AG04450 (cell line): ENCODE measurements at regions of chr12 and their contacts with region 1.

Region 1: GRCh38 chr12:49366652-49367380 is 446 bp upstream of the SPATS2 start:
- DNase-seq: peak; percentile 83
- H3K4me3 ChIP-seq: peak overlapping the region; percentile 68
- H3K27ac ChIP-seq: peak overlapping the region; percentile 93
- H3K27me3 ChIP-seq: no peaks in the 10 kb centered on the region
- CTCF ChIP-seq: peak; percentile 25

Region 2: DNA sequence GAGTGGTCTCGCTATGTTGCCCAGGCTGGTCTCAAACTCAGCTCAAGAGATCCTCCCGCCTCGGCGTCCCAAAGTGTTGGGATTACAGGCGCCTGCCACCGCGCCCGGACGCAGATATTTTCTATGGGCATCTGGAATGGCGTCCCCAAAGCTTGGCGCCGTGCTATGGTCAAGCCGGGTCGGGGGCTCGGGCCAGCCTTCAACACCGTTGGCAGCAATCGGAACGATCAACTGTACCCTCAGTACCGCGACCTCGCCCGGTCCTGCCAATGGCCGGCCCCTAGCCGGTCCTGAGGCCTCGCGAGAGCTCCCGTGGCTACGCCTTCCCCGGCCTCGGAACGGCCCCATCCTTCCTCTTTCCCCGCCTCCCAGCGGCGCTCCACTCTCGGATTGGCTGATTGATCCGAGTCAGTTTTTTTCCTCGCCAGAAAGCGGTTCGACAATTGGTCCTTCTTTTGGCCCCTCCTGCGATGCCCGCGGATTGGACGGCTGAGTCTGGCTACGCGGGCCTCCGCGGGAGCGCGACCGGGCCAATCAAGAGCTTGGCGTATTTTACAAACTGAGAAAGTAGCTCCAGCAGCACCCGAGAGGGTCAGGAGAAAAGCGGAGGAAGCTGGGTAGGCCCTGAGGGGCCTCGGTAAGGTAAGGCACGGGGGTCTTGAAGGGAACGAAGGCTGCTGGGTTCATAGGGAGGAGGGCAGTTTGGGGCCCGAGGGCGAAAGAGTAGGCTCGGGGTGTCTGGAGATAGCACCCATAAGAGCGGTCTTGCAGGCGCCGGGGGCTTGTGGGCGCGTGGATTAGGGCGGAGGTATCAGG is 43.9 kb before region 1 on chr12 and contains the start of gene TROAP:
- CTCF ChIA-PET with region 1: no interaction called
- POLR2A ChIA-PET with region 1: interaction called, 11 read pairs
- DNase-seq: peak; percentile 95
- H3K4me3 ChIP-seq: peak within 1 kb of the TSS; percentile 84
- H3K27ac ChIP-seq: peak within 1 kb of the TSS; percentile 47
- H3K27me3 ChIP-seq: peaks cover 4% of the 10 kb centered on the region
- CTCF ChIP-seq: no peak
- polyA plus RNA-seq, gene TROAP: 7.6 and 10.3 TPM in 2 replicates

Region 3: DNA sequence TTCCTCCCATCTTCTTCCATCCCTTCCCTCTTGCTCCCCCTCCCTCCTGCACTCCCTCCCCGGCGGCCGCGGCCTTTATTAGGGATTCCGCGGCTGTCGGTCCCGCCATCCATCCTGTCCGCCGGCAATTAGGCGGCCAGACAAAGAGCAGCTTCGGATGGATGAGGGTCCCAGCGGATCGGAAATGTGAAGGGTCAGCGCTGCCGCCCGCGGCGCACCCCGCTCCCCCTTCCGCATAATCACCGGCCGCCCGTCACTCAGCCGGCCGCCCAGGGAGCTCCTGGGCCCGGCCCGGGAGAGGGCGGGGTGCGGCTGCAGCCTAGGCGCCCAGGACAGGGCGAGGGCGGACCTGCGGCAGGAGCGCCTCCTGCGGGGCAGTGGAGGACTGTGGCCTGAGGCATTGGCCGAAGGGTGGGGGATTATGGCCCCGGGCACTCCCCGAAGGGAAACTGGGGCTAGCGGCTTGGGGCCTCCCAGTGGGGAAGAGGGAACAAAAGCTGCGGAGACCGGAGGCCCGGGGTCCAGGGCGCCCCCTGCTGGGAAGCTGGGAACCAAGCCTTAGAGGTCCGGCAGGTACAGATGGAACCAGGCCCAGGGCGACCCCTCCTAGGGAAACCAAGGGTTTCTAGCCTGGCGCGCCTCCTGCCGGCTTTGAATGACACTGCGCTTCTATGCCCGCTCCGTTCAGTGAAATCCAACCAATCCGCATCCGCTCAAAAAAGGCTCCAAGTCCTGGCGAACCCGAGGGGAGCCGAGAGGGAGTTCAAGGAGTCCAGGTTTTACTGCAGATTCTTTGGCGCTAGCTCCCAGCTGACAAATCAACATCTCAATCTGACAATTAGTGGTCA is 24.5 kb before region 1 on chr12:
- CTCF ChIA-PET with region 1: interaction called, 14 read pairs
- POLR2A ChIA-PET with region 1: interaction called, 12 read pairs
- DNase-seq: peak; percentile 30
- H3K4me3 ChIP-seq: peak overlapping the region; percentile 49
- H3K27ac ChIP-seq: no peak overlapping the region
- H3K27me3 ChIP-seq: peaks cover 85% of the 10 kb centered on the region
- CTCF ChIP-seq: peak; percentile 70

Region 4: GRCh38 chr12:49347384-49348237 is 19.2 kb before region 1 on chr12:
- CTCF ChIA-PET with region 1: interaction called, 14 read pairs
- POLR2A ChIA-PET with region 1: interaction called, 12 read pairs
- DNase-seq: peak; percentile 77
- H3K4me3 ChIP-seq: peak overlapping the region; percentile 66
- H3K27ac ChIP-seq: peak overlapping the region; percentile 39
- H3K27me3 ChIP-seq: peaks cover 44% of the 10 kb centered on the region
- CTCF ChIP-seq: peak; percentile 87

Region 5: DNA sequence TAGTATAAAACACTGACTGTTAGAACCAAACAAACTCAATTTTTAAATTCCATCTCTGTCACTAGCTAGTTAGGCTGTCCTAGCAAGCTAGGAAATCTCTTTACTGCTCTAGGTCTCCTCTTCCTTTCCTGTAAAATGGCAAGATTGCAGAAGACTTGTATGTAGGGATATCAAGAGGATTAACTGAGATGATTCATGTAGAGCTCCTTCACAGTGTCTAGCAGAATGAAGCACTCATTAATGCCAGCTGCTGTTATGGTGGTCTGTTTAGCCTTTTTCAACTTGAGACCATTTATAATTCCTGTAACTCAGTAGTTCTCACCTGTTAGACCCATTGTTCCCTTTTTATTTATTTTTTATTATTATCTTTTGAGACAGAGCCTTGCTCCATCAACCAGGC is 104.2 kb after region 1 on chr12:
- CTCF ChIA-PET with region 1: no interaction called
- POLR2A ChIA-PET with region 1: interaction called, 12 read pairs
- DNase-seq: no peak
- H3K4me3 ChIP-seq: no peak overlapping the region
- H3K27ac ChIP-seq: no peak overlapping the region
- H3K27me3 ChIP-seq: no peaks in the 10 kb centered on the region
- CTCF ChIP-seq: no peak

Region 6: GRCh38 chr12:49767333-49767732 is 400.5 kb after region 1 on chr12:
- CTCF ChIA-PET with region 1: no interaction called
- POLR2A ChIA-PET with region 1: no interaction called
- DNase-seq: no peak
- H3K4me3 ChIP-seq: no peak overlapping the region
- H3K27ac ChIP-seq: no peak overlapping the region
- H3K27me3 ChIP-seq: no peaks in the 10 kb centered on the region
- CTCF ChIP-seq: no peak